Activated CD8-positive, alpha-beta memory T cell treated with anti-CD3 and anti-CD28 coated beads, Interleukin-2, amount 10 ng/mL, durations not matched to agents 7 days and 5 days (primary cell): ENCODE measurements at regions of chr12 and their contacts with region 1.

Region 1: DNA sequence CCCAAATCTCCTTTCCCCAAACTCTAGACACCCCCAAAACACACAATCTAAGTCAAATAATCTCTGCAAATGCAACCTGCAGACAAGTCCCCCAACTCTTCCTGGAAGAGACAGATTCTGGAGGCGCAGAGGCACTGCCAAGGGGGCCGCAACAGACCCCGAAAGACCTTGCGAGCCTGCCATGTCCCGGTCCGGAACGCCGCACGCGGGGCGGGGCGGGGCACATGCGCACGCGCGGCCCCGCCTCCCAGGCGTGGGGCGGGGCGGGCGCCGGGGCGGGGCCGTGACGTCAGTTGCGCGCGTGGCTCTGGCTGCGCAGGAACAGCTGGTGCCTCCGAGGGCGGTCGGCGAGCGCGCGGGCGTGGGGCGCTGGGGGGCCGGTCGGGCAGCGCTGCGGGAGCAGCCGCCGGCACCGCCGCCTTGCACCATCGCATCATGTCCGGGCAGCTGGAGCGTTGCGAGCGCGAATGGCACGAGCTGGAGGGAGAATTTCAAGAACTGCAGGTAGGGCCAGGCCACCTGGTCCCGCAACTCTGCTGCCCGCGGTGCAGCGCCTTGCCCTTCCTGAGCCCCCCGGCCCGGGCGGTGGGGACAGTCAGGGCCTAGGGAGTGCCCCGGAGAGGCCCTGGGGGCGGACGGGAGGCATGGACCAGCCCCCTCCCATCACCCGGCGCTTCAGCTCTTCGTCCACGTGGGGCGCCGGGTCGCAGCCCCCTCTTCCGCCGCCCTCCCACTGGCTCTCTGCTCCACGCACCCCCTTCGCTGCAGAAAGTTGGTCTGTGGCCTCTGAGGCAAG is at the start of gene TMEM120B:
- DNase-seq: peak; percentile 85
- ATAC-seq: peak; percentile 89
- H3K4me3 Mint-ChIP-seq: peak within 1 kb of the TSS; percentile 99
- H3K27ac Mint-ChIP-seq: peak within 1 kb of the TSS; percentile 96
- H3K4me1 Mint-ChIP-seq: peaks cover 26% of the 10 kb centered on the region
- H3K27me3 Mint-ChIP-seq: no peaks in the 10 kb centered on the region
- total RNA-seq, gene TMEM120B: 8.8 to 11.0 TPM

Region 2: DNA sequence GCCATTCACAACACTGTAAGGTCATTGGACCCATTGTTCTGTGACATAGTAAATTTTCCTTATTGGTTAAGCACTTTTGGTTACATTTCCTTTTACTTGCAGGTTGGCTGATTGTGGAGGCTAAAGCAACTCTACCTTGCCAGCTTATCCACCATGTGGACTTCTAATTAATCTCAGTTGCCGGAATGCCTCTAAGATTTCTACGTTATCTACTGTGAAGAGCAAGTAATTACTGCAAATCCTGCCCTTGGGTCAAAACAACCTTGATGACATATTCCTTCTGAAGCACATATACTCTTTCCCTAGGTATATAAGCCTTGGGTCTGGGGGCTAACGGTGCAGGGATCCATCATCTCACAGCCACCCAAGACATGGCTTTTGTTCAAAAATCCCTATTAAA is 23.7 kb before region 1 on chr12:
- CTCF ChIA-PET with region 1: interaction called, 10 read pairs
- DNase-seq: no peak
- ATAC-seq: no peak
- H3K4me3 Mint-ChIP-seq: no peak overlapping the region
- H3K27ac Mint-ChIP-seq: no peak overlapping the region
- H3K4me1 Mint-ChIP-seq: peaks cover 14% of the 10 kb centered on the region
- H3K27me3 Mint-ChIP-seq: peaks cover 2% of the 10 kb centered on the region

Region 3: DNA sequence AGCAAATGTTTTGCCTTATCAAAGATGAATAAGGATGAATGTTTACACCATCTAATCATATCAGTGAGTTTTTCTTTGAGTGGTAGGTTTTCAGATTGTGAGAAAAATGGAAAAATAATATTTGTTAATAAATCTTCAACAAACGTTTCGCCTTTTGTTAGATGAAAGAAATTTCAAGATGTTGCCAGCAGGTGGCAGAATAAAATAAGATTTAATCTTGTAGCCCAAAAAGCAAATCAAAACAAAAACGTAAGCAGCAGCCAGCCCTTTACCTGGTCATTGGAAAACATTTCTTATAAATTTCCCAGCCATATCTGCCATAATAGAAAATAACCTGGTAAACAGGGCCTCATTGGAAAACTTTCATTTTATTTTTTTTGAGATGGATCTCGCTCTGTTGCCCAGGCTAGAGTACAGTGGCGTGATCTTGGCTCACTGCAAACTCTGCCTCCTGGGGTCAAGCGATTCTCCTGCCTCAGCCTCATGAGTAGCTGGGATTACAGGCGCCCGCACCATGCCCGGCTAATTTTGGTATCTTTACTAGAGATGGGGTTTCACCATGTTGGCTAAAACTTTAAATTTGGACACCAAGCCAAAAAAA is 15.5 kb before region 1 on chr12:
- CTCF ChIA-PET with region 1: interaction called, 10 read pairs
- DNase-seq: no peak
- ATAC-seq: no peak
- H3K4me3 Mint-ChIP-seq: no peak overlapping the region
- H3K27ac Mint-ChIP-seq: no peak overlapping the region
- H3K4me1 Mint-ChIP-seq: peaks cover 4% of the 10 kb centered on the region
- H3K27me3 Mint-ChIP-seq: peaks cover 2% of the 10 kb centered on the region